Spleen (tissue), 13 donors: ENCODE measurements at regions of chr18 and their contacts with region 1.

Region 1: DNA sequence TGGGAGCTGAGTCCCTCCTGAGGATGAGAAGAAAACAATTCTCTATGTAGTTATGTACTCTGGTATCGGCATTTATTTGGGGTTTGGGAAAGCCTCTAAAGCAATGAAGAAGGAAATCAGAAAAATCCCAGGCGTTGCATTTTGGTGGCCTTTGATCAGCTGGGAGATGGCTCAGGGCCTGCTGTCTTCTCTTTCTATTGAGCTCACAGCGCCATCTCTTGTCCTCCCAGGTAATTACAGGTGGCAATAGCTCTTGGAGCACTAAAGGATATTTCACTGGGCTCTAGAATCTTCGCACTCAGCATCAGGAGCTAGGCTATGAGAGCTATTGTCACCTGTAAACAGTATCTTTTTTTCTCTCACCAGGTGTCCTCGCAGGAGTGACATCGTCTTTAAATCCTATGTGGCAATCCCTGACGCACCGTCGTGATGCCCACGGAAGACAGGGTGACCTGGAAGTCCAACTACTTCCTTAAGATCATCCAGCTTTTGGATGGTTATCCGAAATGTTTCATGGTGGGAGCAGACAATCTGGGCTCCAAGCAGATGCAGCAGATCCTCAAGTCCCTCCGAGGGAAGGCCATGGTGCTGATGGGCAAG is 76.1 kb upstream of the PMAIP1 start:
- DNase-seq: no peak
- H3K4me3 ChIP-seq: no peak overlapping the region
- H3K27ac ChIP-seq: no peak overlapping the region
- H3K4me1 ChIP-seq: no peaks in the 10 kb centered on the region
- H3K27me3 ChIP-seq: peaks cover 0 to 15% (median 0%) of the 10 kb centered on the region in 7 donors
- CTCF ChIP-seq: peak in 10 of 11 experiments; percentile 29 to 64 (median 58)
- POLR2A ChIP-seq: no peak

Region 2: GRCh38 chr18:59459369-59460079 is 364.2 kb before region 1 on chr18:
- intact Hi-C with region 1: loop called (anchors 5 kb)
- DNase-seq: no peak
- H3K4me3 ChIP-seq: no peak overlapping the region
- H3K27ac ChIP-seq: no peak overlapping the region
- H3K4me1 ChIP-seq: no peaks in the 10 kb centered on the region
- H3K27me3 ChIP-seq: peaks cover 0 to 32% (median 0%) of the 10 kb centered on the region in 7 donors
- CTCF ChIP-seq: peak in 7 of 11 experiments; percentile 19 to 58 (median 49)
- POLR2A ChIP-seq: no peak